WTC11 (cell line): ENCODE measurements at regions of chr1 and their contacts with region 1.

Region 1: GRCh38 chr1:203117611-203118575 is 9.6 kb upstream of the ADORA1 start:
- DNase-seq: peak; percentile 95
- ATAC-seq: peak; percentile 100
- H3K4me3 Mint-ChIP-seq: peak overlapping the region; percentile 47
- H3K27ac Mint-ChIP-seq: no peak overlapping the region
- H3K4me1 Mint-ChIP-seq: no peaks in the 10 kb centered on the region; the same call in 1 of the 2 replicates
- H3K27me3 Mint-ChIP-seq: peaks cover 17% of the 10 kb centered on the region
- CTCF ChIP-seq: peak; percentile 66

Region 2: GRCh38 chr1:203063287-203063686 is 54.6 kb before region 1 on chr1:
- CTCF ChIA-PET with region 1: interaction called, 11 read pairs
- POLR2A ChIA-PET with region 1: no interaction called
- DNase-seq: no peak
- ATAC-seq: no peak
- H3K4me3 Mint-ChIP-seq: no peak overlapping the region
- H3K27ac Mint-ChIP-seq: no peak overlapping the region
- H3K4me1 Mint-ChIP-seq: peaks cover 9% of the 10 kb centered on the region
- H3K27me3 Mint-ChIP-seq: no peaks in the 10 kb centered on the region
- CTCF ChIP-seq: no peak

Region 3: DNA sequence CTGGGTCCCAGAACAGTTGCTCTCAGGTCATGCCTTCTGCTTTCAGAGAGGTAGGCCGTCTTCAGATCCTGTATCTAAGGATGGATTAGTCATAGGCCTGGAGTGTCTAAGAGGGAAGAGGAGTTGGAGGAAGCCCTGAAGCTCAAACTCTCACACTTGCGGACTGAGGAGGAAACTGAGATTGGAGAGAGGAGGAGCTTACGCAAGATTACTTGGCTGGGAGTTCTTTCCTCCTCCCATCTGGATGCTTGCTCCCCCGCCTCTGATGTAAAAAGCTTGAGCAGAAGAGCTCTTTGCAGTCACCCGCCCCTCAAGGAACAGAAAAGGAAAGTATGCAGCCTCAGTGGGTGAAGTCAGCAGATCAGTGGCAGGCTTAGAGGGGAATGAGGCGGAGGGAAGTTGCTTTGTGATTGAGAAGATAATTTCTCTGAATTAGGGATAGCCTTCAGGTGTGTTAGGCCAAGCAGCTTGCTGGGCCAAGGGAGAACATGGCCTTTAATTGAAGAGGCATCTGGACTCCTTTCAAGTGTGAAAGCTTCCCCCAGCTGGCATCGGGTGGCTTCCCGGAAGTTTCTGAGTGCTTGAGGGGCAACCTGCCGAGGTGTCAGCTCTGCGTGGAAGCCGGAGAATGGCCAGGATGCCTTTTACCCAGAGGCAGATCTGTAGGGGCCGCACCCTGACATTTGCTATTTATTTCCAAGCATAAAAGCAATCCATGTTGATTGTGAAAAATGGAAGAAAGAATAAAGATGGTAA is 16.3 kb after region 1 on chr1:
- CTCF ChIA-PET with region 1: interaction called, 190 read pairs
- POLR2A ChIA-PET with region 1: no interaction called
- DNase-seq: no peak
- ATAC-seq: peak; percentile 40
- H3K4me3 Mint-ChIP-seq: no peak overlapping the region
- H3K27ac Mint-ChIP-seq: no peak overlapping the region
- H3K4me1 Mint-ChIP-seq: peaks cover 11% of the 10 kb centered on the region
- H3K27me3 Mint-ChIP-seq: peaks cover 7% of the 10 kb centered on the region
- CTCF ChIP-seq: no peak

Region 4: DNA sequence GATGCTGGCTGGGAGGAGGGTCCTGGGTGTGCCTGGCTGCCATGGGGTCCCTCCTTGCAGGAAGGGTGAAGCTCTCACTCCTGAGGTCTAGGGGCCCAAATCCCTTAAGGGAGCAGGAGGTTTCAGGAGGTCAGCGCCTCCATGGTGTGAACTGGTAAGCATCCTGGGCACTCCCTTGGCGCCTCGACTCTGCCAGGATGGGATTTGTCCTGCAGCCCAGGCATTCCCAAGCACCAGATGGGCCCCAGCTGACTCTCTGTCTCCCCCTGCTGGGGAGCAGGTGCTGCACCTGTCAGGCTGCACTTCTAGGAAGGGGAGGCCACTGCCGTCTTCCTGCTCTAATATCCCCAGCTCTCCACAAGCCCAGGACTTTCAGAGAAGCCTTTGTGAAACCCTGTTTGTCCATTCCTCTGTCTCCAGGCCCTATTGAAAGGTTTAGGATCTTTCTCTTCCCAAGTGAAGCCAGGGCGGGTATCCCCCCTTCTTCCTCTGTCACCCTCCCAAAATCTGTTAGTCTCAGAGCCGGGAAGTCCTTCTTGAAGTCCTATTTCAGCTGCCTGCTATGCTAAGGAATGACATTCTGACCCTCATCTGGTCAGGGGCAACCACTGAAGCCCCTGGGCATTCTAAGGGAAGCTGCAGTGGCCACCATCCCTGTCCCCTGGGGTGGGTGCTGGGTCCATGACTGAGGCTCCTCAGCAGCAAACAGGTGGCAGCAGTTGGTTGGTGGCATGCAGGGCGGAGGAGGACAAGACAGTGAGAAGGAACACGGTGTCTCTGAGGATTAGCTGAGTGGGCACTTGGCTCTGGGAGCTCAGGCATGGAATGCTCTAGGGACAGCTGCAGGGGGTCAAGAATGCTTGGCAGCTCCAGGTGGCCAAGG is 54.5 kb after region 1 on chr1:
- CTCF ChIA-PET with region 1: interaction called, 110 read pairs
- POLR2A ChIA-PET with region 1: interaction called, 4 read pairs
- DNase-seq: peak; percentile 88
- ATAC-seq: peak; percentile 91
- H3K4me3 Mint-ChIP-seq: no peak overlapping the region
- H3K27ac Mint-ChIP-seq: no peak overlapping the region
- H3K4me1 Mint-ChIP-seq: peaks cover 11% of the 10 kb centered on the region
- H3K27me3 Mint-ChIP-seq: no peaks in the 10 kb centered on the region
- CTCF ChIP-seq: peak; percentile 96

Region 5: GRCh38 chr1:203216274-203217138 is 98.6 kb after region 1 on chr1:
- CTCF ChIA-PET with region 1: interaction called, 192 read pairs
- POLR2A ChIA-PET with region 1: interaction called, 7 read pairs
- DNase-seq: peak; percentile 75
- ATAC-seq: peak; percentile 75
- H3K4me3 Mint-ChIP-seq: peak overlapping the region; percentile 29
- H3K27ac Mint-ChIP-seq: peak overlapping the region; percentile 34
- H3K4me1 Mint-ChIP-seq: peaks cover 17% of the 10 kb centered on the region
- H3K27me3 Mint-ChIP-seq: peaks cover 6% of the 10 kb centered on the region
- CTCF ChIP-seq: peak; percentile 75